ENCODE measurements at regions of chr10 and their contacts with region 1.

Region 1: GRCh38 chr10:27341001-27341400 is 100.4 kb upstream of the ACBD5 start:
- DNase-seq: no peak
- ATAC-seq: no peak
- H3K4me3 ChIP-seq: no peak overlapping the region
- H3K4me3 Mint-ChIP-seq: no peak overlapping the region
- H3K27ac ChIP-seq: no peak overlapping the region
- H3K27ac Mint-ChIP-seq: no peak overlapping the region
- H3K4me1 ChIP-seq: no peaks in the 10 kb centered on the region
- H3K4me1 Mint-ChIP-seq: no peaks in the 10 kb centered on the region
- H3K27me3 ChIP-seq: peaks cover 0 to 2% of the 10 kb centered on the region in 2 experiments
- H3K27me3 Mint-ChIP-seq: peaks cover under 1% of the 10 kb centered on the region
- CTCF ChIP-seq: no peak

Region 2: GRCh38 chr10:27319752-27320561 is 21.0 kb before region 1 on chr10:
- CTCF ChIA-PET with region 1: no interaction called
- POLR2A ChIA-PET with region 1: no interaction called
- intact Hi-C with region 1: loop called in 1 of 2 experiments (anchors 2 kb)
- DNase-seq: peak in 8 of 14 experiments; percentile 3 to 63 (median 20)
- ATAC-seq: no peak
- H3K4me3 ChIP-seq: no peak overlapping the region
- H3K4me3 Mint-ChIP-seq: peak overlapping the region; percentile 28
- H3K27ac ChIP-seq: no peak overlapping the region
- H3K27ac Mint-ChIP-seq: no peak overlapping the region
- H3K4me1 ChIP-seq: peaks cover 2% of the 10 kb centered on the region
- H3K4me1 Mint-ChIP-seq: peaks cover 3% of the 10 kb centered on the region
- H3K27me3 ChIP-seq: peaks cover 6 to 7% of the 10 kb centered on the region in 2 experiments
- H3K27me3 Mint-ChIP-seq: peaks cover 35% of the 10 kb centered on the region
- CTCF ChIP-seq: no peak

Region 3: GRCh38 chr10:27558612-27559020 is 217.6 kb after region 1 on chr10:
- CTCF ChIA-PET with region 1: no interaction called
- POLR2A ChIA-PET with region 1: no interaction called
- intact Hi-C with region 1: no loop called
- DNase-seq: peak in 7 of 14 experiments; percentile 4 to 58 (median 36)
- ATAC-seq: no peak
- H3K4me3 ChIP-seq: no peak overlapping the region
- H3K4me3 Mint-ChIP-seq: no peak overlapping the region
- H3K27ac ChIP-seq: no peak overlapping the region
- H3K27ac Mint-ChIP-seq: no peak overlapping the region
- H3K4me1 ChIP-seq: peaks cover under 1% of the 10 kb centered on the region
- H3K4me1 Mint-ChIP-seq: no peaks in the 10 kb centered on the region
- H3K27me3 ChIP-seq: no peaks in the 10 kb centered on the region
- H3K27me3 Mint-ChIP-seq: no peaks in the 10 kb centered on the region
- CTCF ChIP-seq: peak; percentile 46